ENCODE measurements at regions of chr10 and their contacts with region 1.

Region 1: DNA sequence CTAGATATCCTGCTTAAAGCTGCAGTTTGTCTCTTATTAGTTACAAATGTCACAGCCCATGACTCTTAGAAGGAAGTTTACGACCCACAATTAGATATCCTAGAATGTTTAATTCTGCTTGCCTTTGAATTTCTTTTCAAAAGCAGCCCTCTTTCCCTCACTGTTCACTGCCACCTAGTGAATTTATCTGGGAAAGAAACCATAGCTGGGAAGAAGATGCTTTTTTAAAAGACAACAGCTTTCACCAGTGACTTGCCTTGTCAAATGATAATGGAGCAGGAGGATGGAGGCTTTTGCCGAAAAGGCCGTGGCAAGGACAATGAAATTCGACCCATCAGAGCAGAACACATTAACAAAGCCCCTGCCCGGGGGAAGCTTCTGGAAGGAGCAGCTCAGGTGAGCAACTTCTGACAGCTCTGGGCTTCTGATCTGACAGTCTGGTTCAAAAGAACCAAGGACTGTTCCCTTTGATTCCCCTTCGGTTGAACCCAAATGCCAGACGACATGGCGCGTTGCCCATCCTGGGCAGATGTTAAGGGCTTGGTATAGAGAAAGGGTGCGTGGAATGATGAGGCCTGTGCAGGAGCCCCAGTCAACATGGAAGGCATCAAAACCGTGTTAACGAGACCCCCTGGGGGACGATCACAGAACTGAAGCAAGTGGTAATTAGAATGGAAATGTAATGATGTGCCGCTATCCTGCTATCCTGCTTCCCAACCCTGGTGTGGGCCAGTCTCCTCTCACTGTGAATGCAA is 236.8 kb downstream of the FRMD4A start:
- DNase-seq: no peak
- ATAC-seq: no peak
- H3K4me3 ChIP-seq: no peak overlapping the region
- H3K27ac ChIP-seq: no peak overlapping the region
- H3K4me1 ChIP-seq: no peaks in the 10 kb centered on the region
- H3K27me3 ChIP-seq: no peaks in the 10 kb centered on the region

Region 2: DNA sequence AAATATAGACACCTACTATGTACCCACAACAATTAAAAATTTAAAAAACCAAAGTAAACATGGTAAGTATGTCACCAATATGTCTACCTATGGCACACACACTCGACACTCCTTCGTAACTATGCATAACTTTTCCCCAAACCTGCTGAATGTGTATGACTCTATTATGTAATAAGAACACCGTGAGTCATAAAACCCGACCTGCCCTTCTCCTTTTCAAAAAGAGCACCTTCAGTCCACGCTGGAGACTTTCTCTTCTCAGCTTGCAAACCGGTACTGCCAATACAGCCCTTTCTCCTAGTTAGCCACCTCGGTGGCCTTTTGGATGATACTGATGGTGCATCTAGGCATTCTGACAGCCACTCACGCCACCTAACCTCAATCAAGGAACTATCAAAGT is 320.8 kb before region 1 on chr10:
- intact Hi-C with region 1: no loop called
- DNase-seq: no peak
- ATAC-seq: no peak
- H3K4me3 ChIP-seq: no peak overlapping the region
- H3K27ac ChIP-seq: no peak overlapping the region
- H3K4me1 ChIP-seq: no peaks in the 10 kb centered on the region
- H3K27me3 ChIP-seq: no peaks in the 10 kb centered on the region

Region 3: DNA sequence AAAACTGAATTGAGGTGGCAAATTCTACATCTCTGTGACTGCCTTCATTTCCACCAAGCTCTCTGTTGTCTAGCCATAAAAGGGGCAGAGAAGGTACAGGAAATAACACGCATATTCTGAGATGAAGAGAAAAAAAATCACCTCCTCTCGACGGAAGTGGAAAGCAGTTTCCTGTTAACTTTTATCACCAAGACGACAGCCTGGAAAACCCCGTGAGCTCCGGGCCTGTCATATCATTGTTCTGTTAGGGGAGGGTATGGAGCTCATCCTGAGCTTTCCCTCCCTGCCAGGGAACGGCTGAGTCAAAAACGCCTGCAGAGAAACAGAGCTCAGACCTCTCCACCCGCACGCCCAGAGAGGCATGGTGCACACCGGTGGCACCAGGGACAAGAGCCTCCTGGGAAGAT is 306.9 kb before region 1 on chr10:
- intact Hi-C with region 1: loop called (anchors 5 to 10 kb)
- DNase-seq: peak; percentile 51 to 76
- ATAC-seq: no peak
- H3K4me3 ChIP-seq: no peak overlapping the region
- H3K27ac ChIP-seq: no peak overlapping the region
- H3K4me1 ChIP-seq: no peaks in the 10 kb centered on the region
- H3K27me3 ChIP-seq: no peaks in the 10 kb centered on the region

Region 4: DNA sequence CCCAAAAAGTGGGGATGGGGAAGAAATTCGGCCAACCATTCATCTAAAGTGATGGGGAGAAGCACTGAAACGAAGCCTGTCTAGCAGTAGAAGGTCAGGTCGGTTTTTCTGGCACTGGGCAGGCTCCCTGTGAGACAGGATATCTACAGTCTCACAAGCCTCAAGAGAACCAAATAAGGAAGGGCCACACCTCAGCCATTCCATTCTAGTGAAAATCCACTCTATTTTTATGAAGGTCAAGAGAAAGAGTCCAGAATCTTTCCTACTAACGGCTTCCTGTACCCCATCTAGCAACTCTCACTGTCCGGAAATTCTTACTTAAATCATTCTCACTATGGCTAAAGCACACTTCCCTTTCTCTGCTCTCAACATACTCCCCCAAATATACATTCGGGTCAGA is 240.1 kb before region 1 on chr10:
- intact Hi-C with region 1: no loop called
- DNase-seq: no peak
- ATAC-seq: peak; percentile 84
- H3K4me3 ChIP-seq: no peak overlapping the region
- H3K27ac ChIP-seq: peak overlapping the region; percentile 88 to 94
- H3K4me1 ChIP-seq: peaks cover 0 to 2% of the 10 kb centered on the region in 2 donors
- H3K27me3 ChIP-seq: no peaks in the 10 kb centered on the region

Region 5: DNA sequence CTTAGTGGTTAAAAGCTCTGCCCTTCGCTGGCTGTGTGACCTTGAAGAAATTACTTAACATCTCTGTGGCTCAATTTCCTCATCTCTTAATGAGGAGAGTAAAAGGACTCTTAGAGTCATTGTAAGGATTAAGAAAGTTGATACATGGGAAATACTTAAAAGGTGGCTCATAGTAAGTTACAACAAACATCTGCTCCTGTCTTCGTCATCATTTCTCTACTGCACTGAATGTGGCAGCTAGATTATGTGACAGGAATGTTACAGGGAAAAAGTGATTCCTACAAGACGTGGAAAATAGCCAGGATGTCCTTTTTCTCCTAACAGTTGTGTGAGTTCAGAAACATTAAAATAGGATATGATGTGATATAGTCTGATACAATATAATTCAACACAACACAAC is 52.1 kb after region 1 on chr10:
- intact Hi-C with region 1: no loop called
- DNase-seq: no peak
- ATAC-seq: no peak
- H3K4me3 ChIP-seq: no peak overlapping the region
- H3K27ac ChIP-seq: no peak overlapping the region
- H3K4me1 ChIP-seq: no peaks in the 10 kb centered on the region
- H3K27me3 ChIP-seq: no peaks in the 10 kb centered on the region